AG04450 (cell line): ENCODE measurements at regions of chr9 and their contacts with region 1.

Region 1: DNA sequence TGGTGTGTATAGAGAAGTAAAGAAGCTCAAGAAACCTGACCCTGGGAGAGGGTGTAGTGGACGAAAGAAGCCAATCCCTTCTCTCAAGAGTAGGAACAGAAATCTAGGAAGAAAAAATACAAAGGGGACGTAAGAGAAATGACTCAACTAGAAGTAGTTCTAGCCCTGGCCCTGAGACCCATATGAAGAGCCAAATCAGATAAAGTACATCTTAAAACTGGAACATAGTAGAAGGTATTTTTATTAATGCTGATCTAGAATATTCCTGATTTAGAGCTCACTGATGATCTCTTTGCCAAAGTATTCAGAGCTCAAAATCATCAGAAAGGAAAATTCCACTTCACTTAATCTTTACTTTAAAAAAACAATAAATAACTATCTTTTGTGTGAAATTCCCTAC is 184.8 kb downstream of the MLLT3 start:
- DNase-seq: no peak
- H3K4me3 ChIP-seq: no peak overlapping the region
- H3K27ac ChIP-seq: no peak overlapping the region
- H3K27me3 ChIP-seq: no peaks in the 10 kb centered on the region
- CTCF ChIP-seq: no peak

Region 2: GRCh38 chr9:19085295-19085694 is 1352.2 kb before region 1 on chr9:
- CTCF ChIA-PET with region 1: no interaction called
- POLR2A ChIA-PET with region 1: interaction called, 14 read pairs
- DNase-seq: no peak
- H3K4me3 ChIP-seq: no peak overlapping the region
- H3K27ac ChIP-seq: no peak overlapping the region
- H3K27me3 ChIP-seq: no peaks in the 10 kb centered on the region
- CTCF ChIP-seq: peak; percentile 37

Region 3: GRCh38 chr9:20473515-20474013 is 36.1 kb after region 1 on chr9:
- CTCF ChIA-PET with region 1: no interaction called
- POLR2A ChIA-PET with region 1: no interaction called
- DNase-seq: no peak
- H3K4me3 ChIP-seq: no peak overlapping the region
- H3K27ac ChIP-seq: no peak overlapping the region
- H3K27me3 ChIP-seq: no peaks in the 10 kb centered on the region
- CTCF ChIP-seq: no peak

Region 4: GRCh38 chr9:20962536-20963225 is 525.2 kb after region 1 on chr9:
- CTCF ChIA-PET with region 1: no interaction called
- POLR2A ChIA-PET with region 1: no interaction called
- DNase-seq: no peak
- H3K4me3 ChIP-seq: no peak overlapping the region
- H3K27ac ChIP-seq: no peak overlapping the region
- H3K27me3 ChIP-seq: no peaks in the 10 kb centered on the region
- CTCF ChIP-seq: no peak